GM10248 (cell line): ENCODE measurements at regions of chr17 and their contacts with region 1.

Region 1: DNA sequence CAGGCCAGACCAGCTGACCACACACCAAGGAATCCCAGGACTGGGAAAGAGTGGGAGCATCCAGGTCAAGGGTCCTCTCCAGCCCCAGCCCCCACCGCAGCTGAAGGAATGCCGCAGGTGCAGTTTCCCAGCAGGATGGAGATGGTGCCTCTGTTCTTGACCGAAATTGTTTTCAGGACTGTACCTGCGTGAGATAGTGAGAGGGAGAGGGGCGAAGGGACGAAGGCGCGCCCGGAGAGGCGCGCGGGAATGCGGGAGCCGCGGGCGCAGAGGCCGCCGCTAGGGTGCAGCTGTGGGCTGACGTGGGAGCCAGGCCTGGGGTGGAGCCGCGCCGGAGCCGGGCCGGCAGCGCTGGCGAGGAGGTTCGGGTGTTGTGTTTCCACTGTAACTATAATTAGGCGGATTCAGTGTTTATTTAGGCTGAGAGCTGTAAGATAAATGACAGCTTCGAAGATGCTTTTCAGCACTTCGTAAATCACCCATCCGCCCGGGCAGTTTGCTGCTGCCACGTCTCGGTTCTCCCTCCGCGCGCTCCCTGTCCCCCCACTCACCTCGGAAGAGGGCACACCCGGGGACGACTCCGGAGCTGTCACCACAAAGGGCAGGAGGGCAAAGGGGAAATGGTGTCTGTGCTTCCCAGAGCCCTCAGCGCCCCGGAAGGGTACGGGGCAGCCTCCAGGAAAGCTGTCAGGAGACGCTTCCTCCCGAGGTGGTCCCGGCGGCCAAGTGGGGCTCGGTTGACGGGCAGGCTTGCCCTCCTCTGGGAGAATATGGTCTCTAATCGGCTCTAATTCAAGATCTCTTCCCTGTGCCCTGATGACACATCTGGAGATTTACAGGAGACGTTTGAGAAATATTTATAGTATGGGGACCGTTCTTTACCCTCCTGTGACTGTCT is 38.2 kb downstream of the HOXB1 start:
- DNase-seq: peak; percentile 83
- CTCF ChIP-seq: peak; percentile 90

Region 2: DNA sequence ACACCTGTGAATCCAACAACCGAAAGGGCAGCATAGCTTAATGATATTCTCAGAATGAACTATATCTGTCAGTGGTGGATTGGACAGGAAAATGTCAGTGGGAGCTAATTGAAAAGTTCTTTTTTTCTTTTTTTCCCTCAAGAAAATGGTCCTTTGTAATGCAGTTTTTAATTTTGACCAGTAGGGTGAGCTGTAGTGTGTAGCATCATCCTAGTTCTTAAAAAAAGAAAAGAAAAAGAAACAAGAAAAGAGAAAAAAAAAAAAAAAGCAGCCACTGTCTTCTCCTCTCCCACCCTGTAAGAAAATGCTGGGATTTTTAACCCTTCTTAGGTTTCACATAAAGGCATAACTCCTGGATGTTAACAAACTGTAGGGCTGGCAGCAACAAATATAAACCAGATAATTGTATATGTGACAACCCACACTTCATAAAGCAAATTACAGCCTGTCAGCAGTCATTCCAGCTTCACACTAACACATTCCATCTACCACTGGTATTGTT is 140.8 kb before region 1 on chr17:
- CTCF ChIA-PET with region 1: interaction called, 13 read pairs
- POLR2A ChIA-PET with region 1: no interaction called
- DNase-seq: peak; percentile 36
- CTCF ChIP-seq: peak; percentile 62

Region 3: DNA sequence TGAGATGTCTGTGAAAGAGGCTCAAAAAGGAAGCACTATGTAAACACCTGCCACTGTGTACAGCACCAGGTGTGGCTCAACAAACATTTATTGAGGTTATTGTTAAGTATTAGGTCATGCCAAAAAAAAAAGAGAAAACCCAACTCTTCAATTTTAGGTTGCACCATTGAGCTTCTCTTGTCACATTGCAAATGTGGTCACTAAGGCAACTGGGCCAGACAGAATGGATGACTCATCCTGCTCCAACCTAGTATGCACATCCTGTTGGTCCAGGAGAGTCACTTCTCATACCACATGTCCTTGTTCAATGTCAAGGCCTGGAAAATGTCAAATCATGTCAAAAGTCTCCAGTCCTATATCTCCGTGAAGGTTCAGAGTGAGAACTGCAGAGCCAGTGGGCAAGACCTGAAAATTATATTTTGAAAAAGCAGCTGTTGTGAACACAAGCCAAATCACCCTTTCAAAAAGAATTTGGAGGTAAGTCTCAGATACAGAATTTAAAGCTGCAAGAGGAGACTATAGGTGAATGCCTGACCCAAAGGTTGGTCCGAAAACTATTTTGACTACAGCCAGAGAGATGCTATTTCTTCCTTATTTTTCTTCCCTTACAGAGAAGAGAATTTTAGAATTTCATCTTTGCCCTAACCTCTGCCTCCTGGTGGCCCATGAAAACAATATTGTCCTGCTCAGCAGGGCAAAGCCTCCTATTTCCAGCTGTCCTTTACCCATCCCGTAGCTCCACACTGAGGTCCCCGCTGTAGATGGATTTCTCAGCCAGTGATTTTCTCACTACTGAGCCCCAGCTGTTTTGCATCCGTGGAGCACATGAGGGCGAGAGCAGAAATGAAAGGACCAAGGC is 13.4 kb after region 1 on chr17:
- CTCF ChIA-PET with region 1: interaction called, 24 read pairs
- POLR2A ChIA-PET with region 1: interaction called, 3 read pairs
- DNase-seq: peak; percentile 66
- CTCF ChIP-seq: no peak

Region 4: DNA sequence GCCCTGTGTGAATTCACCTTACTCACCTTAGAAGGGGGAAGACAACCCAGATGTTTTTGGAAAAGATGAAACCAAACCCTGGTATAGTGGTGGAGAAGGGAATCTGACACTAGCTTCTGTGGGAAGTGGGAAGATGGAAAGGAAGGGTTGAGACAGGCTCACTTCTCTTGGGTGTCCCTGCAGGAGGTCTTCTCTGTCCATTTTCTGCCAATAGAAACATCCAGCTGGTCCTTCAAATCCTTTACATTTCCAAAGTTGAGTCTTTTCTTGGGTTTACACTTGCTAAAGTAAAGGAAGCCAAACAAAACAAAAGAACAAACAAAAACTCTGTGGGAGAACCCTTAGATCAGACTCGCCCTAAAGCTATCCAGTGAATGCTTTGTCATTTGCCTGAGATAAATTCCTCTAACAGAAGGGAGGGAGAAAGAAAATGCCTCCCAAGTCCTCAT is 28.0 kb after region 1 on chr17:
- CTCF ChIA-PET with region 1: interaction called, 16 read pairs
- POLR2A ChIA-PET with region 1: no interaction called
- DNase-seq: no peak
- CTCF ChIP-seq: no peak

Region 5: DNA sequence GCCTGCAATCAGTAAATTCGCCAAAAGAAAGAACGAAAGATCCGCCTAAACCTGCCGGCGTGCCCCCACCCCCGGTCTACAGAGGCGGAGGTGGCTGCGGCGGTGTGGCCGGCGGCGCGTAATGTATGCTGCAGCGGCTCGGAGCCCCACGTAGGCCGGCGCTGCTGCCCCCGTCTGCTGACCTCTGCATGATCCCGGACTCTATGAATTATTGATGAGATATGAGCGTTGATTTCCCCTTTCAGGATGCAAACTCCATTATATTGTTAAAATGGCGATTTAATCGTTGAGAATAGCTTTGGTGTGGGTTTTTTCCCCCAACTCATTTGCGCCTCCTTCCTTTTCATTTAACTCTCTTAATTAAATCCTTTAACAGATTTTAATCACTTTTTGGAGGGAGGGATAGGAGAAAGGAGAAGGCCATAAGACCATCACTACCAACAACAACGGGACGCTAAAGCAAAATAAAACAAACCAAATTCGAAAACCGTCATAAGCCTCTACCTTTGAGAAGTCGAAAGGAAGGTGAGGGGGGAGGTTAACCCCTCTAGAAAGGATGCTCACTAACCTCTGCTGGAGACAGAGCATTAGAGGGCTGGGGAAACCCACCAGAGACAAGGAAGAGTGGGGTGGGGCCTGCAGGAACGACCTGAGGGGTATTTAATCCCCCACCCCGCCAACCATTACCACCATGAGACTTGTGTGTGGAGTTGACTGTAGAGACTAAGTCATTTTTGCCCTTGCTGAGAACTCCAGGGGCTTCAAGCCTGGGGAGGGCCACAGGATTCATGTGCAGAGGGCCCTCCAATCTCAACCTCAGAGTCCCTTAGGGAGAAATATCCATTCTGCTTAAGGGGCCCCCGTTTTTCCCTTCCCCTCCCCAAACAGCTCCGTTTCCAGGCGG is 94.0 kb after region 1 on chr17:
- CTCF ChIA-PET with region 1: interaction called, 18 read pairs
- POLR2A ChIA-PET with region 1: no interaction called
- DNase-seq: peak; percentile 74
- CTCF ChIP-seq: no peak

Region 6: GRCh38 chr17:48915459-48916282 is 423.0 kb after region 1 on chr17:
- CTCF ChIA-PET with region 1: no interaction called
- POLR2A ChIA-PET with region 1: no interaction called
- DNase-seq: peak; percentile 76
- CTCF ChIP-seq: no peak